Ovary (tissue), 10 donors: ENCODE measurements at regions of chr10 and their contacts with region 1.

Region 1: GRCh38 chr10:97210543-97210961 is 24.8 kb upstream of the SLIT1 start:
- DNase-seq: peak; percentile 52 to 77 (median 73)
- H3K4me3 ChIP-seq: no peak overlapping the region
- H3K27ac ChIP-seq: no peak overlapping the region
- H3K4me1 ChIP-seq: no peaks in the 10 kb centered on the region
- H3K27me3 ChIP-seq: no peaks in the 10 kb centered on the region
- CTCF ChIP-seq: peak; percentile 77 to 97 (median 92)
- EP300 ChIP-seq: no peak
- POLR2A ChIP-seq: no peak

Region 2: DNA sequence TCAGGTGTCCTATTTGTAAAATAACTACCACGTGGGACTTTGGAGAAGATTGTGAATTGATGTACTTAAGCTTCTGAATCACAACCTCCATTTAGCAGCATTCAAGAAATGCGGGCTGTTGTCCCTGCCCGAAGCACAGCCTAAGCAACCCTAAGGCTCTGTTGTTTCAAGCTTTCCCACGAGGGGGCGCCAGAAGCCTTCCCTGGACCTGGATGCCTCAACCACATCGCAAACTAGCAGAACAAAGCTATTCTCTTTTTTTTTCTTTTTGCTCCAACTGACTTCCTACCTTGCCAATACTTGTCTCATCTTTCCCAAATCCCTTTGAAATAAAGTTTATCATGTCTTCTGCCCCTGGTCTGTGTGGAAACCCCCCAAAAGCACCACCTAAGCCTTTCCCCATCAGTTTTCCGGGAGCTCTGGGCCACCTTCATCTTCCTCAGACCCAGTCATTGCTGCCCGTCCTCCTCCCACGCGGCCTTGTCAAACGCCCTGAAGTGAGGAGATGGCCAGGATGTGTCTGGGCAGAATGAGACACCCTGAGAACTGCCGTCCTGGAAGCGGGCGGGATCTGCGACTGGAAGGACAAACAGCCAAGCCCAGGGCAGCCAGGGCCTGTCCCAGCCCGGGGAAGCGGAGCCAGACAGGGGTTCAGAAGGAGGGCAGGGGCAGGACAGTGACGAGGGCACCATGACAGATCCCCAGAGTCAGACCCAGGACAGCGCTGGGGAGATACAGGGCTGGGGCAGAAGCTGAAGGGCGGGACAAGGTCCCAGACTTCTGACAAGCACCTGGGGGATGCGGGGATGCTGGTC is 137.5 kb before region 1 on chr10:
- intact Hi-C with region 1: loop called (anchors 2 to 10 kb)
- DNase-seq: peak; percentile 74 to 90 (median 83)
- H3K4me3 ChIP-seq: no peak overlapping the region
- H3K27ac ChIP-seq: no peak overlapping the region
- H3K4me1 ChIP-seq: no peaks in the 10 kb centered on the region
- H3K27me3 ChIP-seq: no peaks in the 10 kb centered on the region
- CTCF ChIP-seq: peak; percentile 61 to 77 (median 68)
- EP300 ChIP-seq: no peak
- POLR2A ChIP-seq: no peak

Region 3: DNA sequence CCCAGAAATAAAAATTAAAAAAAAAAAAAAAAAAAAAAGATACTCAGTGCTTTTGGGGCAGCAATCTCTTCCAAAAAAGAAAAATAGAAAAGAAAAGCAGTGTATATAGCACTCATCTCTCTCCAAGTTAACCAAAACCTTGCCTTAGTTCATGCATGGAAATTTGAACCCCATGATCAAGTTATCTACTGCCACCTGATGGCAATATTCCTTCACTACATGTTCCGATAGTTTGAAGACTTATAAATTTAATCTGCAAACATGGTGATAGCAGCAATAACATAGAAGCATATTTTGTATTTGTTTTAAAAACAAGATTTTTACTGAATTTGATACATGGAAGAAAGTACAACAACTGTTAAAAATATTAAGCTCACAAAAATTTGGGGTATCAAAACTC is 23.8 kb after region 1 on chr10:
- intact Hi-C with region 1: no loop called
- DNase-seq: no peak
- H3K4me3 ChIP-seq: no peak overlapping the region
- H3K27ac ChIP-seq: no peak overlapping the region
- H3K4me1 ChIP-seq: no peaks in the 10 kb centered on the region
- H3K27me3 ChIP-seq: no peaks in the 10 kb centered on the region
- CTCF ChIP-seq: peak in 2 of 3 donors; percentile 33
- EP300 ChIP-seq: no peak
- POLR2A ChIP-seq: no peak